ENCODE measurements at regions of chr18 and their contacts with region 1.

Region 1: DNA sequence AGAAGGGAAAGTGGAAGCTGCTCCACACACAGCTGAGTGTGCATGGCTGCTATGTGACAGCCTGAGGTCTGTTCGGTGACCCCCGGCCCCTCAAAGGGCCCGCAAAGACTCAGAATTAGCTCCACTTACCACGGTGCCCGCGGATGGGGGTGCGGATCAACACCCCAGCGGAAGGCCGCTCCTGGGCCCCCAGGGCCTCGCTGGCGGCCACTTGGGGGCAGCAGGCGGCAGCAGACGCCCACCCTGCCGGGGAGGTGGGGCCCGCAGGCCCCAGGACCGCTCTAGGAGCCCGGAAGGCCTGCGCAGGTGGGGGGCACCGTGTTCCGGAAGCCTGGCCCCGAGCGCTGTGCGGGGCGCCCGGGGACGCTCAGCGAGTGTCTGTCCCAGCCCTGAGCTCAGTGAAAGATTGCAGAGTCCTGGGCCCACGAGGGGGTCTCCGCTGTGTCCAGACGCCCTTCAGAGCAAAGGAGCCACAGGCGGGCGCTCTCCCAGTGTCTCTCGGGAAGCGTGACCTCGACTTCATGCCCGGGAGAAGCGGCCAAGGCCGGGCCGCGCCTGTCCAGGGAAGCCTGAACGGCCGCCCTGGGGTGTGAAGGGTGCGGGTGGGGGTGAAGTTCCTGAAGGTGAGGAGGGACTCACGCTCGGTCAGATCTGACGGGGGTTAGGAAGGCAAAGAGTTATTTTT is 118.7 kb downstream of the VAPA start:
- DNase-seq: peak; percentile 14 to 80 (median 51)
- ATAC-seq: peak; percentile 97
- H3K4me3 ChIP-seq: peak overlapping the region; percentile 47 to 62
- H3K4me3 Mint-ChIP-seq: peak overlapping the region; percentile 85
- H3K27ac ChIP-seq: peak overlapping the region; percentile 59 to 62
- H3K27ac Mint-ChIP-seq: peak overlapping the region; percentile 93
- H3K4me1 ChIP-seq: peaks cover 12% of the 10 kb centered on the region
- H3K4me1 Mint-ChIP-seq: peaks cover 16% of the 10 kb centered on the region
- H3K27me3 ChIP-seq: no peaks in the 10 kb centered on the region
- H3K27me3 Mint-ChIP-seq: no peaks in the 10 kb centered on the region
- CTCF ChIP-seq: no peak

Region 2: DNA sequence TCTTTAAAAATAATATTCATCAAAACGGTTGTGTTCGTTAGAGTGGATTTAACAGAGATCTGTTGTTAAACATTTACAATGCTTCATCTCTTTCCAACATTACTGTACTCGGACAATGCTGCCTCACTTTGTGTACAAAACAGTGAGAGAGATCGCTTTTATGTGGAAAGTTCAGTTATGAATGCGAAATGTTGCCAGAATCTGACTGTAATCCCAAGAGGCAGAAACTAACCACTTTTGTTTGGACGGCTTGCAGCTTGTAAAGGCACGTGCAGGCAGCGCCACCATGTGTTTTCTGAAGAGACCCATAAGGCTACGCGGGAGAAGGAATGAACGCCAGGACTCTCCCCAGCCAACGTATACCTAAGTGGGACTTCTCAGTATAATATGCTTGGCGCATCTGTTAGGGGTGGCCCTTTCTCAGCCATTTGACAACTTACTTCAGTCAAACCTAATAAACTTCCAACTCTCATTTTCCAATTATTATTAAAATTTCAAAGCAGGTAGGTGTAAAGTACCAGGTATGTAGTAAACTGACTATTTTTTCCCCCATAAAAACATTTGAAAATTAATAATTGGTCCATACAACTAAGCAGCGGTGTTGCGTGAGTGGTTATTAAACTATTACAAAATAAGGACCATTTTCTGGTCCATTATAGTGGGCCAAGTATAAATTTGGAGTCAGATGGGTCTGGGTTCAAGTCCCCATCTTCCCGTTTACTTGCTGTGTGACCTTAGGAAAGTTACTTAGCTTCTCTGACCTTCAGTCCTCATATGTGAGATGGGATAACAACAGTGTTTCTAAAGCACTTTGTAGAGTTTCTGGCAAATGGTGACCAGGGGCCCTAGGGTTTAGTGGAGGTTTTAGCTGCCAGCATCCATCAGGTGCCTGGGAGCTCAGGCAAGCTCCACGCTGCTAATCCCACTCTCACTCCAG is 487.8 kb after region 1 on chr18:
- CTCF ChIA-PET with region 1: interaction called, 8 read pairs
- POLR2A ChIA-PET with region 1: no interaction called
- intact Hi-C with region 1: loop called in 1 of 2 experiments (anchors 5 kb)
- DNase-seq: peak; percentile 8 to 77 (median 56)
- ATAC-seq: peak; percentile 89
- H3K4me3 ChIP-seq: no peak overlapping the region
- H3K4me3 Mint-ChIP-seq: no peak overlapping the region
- H3K27ac ChIP-seq: no peak overlapping the region
- H3K27ac Mint-ChIP-seq: no peak overlapping the region
- H3K4me1 ChIP-seq: peaks cover 3% of the 10 kb centered on the region
- H3K4me1 Mint-ChIP-seq: peaks cover 14% of the 10 kb centered on the region
- H3K27me3 ChIP-seq: peaks cover 0 to 3% of the 10 kb centered on the region in 2 experiments
- H3K27me3 Mint-ChIP-seq: peaks cover 30% of the 10 kb centered on the region
- CTCF ChIP-seq: peak; percentile 54